ENCODE measurements at regions of chr4 and their contacts with region 1.

Region 1: GRCh38 chr4:16205298-16206164 is 20.7 kb downstream of the TAPT1 start:
- DNase-seq: peak; percentile 28
- ATAC-seq: peak; percentile 86
- H3K4me3 Mint-ChIP-seq: no peak overlapping the region
- H3K27ac Mint-ChIP-seq: peak overlapping the region; percentile 7
- H3K4me1 Mint-ChIP-seq: peaks cover 33% of the 10 kb centered on the region
- H3K27me3 Mint-ChIP-seq: no peaks in the 10 kb centered on the region
- CTCF ChIP-seq: no peak

Region 2: GRCh38 chr4:16187455-16187854 is 18.1 kb before region 1 on chr4:
- CTCF ChIA-PET with region 1: interaction called, 11 read pairs
- POLR2A ChIA-PET with region 1: no interaction called
- intact Hi-C with region 1: no loop called
- DNase-seq: no peak
- ATAC-seq: no peak
- H3K4me3 Mint-ChIP-seq: no peak overlapping the region
- H3K27ac Mint-ChIP-seq: no peak overlapping the region
- H3K4me1 Mint-ChIP-seq: peaks cover 9% of the 10 kb centered on the region
- H3K27me3 Mint-ChIP-seq: no peaks in the 10 kb centered on the region
- CTCF ChIP-seq: no peak

Region 3: GRCh38 chr4:16217300-16218051 is 11.9 kb after region 1 on chr4:
- CTCF ChIA-PET with region 1: interaction called, 20 read pairs
- POLR2A ChIA-PET with region 1: interaction called, 3 read pairs
- intact Hi-C with region 1: loop called (anchors 1 kb)
- DNase-seq: no peak
- ATAC-seq: peak; percentile 57
- H3K4me3 Mint-ChIP-seq: peak overlapping the region; percentile 5
- H3K27ac Mint-ChIP-seq: peak overlapping the region; percentile 46
- H3K4me1 Mint-ChIP-seq: peaks cover 47% of the 10 kb centered on the region
- H3K27me3 Mint-ChIP-seq: no peaks in the 10 kb centered on the region
- CTCF ChIP-seq: no peak

Measured in activated B cell treated with CpG ODN at 0.5 μM for 24 hours (primary cell).